ENCODE measurements at regions of chr1 and their contacts with region 1.

Region 1: GRCh38 chr1:7036386-7036785 is 251.1 kb downstream of the CAMTA1 start:
- DNase-seq: no peak
- H3K4me3 ChIP-seq: no peak overlapping the region
- H3K27ac ChIP-seq: no peak overlapping the region
- H3K4me1 ChIP-seq: no peaks in the 10 kb centered on the region
- H3K27me3 ChIP-seq: no peaks in the 10 kb centered on the region
- CTCF ChIP-seq: no peak
- EP300 ChIP-seq: no peak
- POLR2A ChIP-seq: no peak
- RAD21 ChIP-seq: no peak

Region 2: DNA sequence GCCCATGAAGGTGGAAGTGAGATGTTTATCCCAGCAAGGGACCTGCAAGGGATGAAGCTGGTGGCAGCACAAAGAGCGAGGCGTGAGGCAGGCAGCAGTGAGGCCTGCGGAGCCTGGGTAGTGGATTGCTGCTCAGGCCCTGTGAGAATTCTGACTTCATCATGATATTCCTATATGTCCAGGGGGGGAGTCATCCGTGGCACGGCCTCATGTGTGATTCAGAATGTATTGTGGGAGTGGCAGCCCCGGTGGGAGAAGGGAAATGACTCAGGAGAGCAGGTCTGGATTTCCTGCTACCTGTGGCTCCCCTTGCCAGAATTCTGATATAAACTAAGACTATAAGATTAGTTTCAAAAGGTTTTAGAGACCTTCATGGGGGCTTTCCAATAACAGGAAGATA is 10.2 kb before region 1 on chr1:
- CTCF ChIA-PET with region 1: interaction called, 12 read pairs
- POLR2A ChIA-PET with region 1: no interaction called
- DNase-seq: no peak
- H3K4me3 ChIP-seq: no peak overlapping the region
- H3K27ac ChIP-seq: no peak overlapping the region
- H3K4me1 ChIP-seq: peaks cover 2 to 7% (median 5%) of the 10 kb centered on the region in 4 experiments; a peak in 6 of 7 replicates
- H3K27me3 ChIP-seq: no peaks in the 10 kb centered on the region
- CTCF ChIP-seq: no peak
- EP300 ChIP-seq: no peak
- POLR2A ChIP-seq: no peak
- RAD21 ChIP-seq: no peak

Measured in H1 (cell line).